ENCODE measurements at regions of chr10 and their contacts with region 1.

Region 1: GRCh38 chr10:113126229-113127201 is 176.5 kb downstream of the TCF7L2 start:
- DNase-seq: peak; percentile 60
- H3K4me3 Mint-ChIP-seq: no peak overlapping the region
- H3K27ac Mint-ChIP-seq: no peak overlapping the region
- H3K4me1 Mint-ChIP-seq: peaks cover 4% of the 10 kb centered on the region
- H3K27me3 Mint-ChIP-seq: peaks cover 45% of the 10 kb centered on the region

Region 2: GRCh38 chr10:112565434-112566053 is 561.0 kb before region 1 on chr10:
- CTCF ChIA-PET with region 1: no interaction called
- intact Hi-C with region 1: loop called (anchors 5 kb)
- DNase-seq: peak; percentile 36
- H3K4me3 Mint-ChIP-seq: no peak overlapping the region
- H3K27ac Mint-ChIP-seq: no peak overlapping the region
- H3K4me1 Mint-ChIP-seq: no peaks in the 10 kb centered on the region
- H3K27me3 Mint-ChIP-seq: no peaks in the 10 kb centered on the region

Region 3: GRCh38 chr10:112721080-112721698 is 405.3 kb before region 1 on chr10:
- CTCF ChIA-PET with region 1: interaction called, 6 read pairs
- intact Hi-C with region 1: loop called (anchors 1 kb)
- DNase-seq: peak; percentile 14
- H3K4me3 Mint-ChIP-seq: no peak overlapping the region
- H3K27ac Mint-ChIP-seq: no peak overlapping the region
- H3K4me1 Mint-ChIP-seq: no peaks in the 10 kb centered on the region
- H3K27me3 Mint-ChIP-seq: no peaks in the 10 kb centered on the region

Measured in activated naive CD4-positive, alpha-beta T cell treated with anti-CD3 and anti-CD28 coated beads for 36 hours (primary cell).